Endothelial cell of umbilical vein (primary cell): ENCODE measurements at regions of chr9 and their contacts with region 1.

Region 1: DNA sequence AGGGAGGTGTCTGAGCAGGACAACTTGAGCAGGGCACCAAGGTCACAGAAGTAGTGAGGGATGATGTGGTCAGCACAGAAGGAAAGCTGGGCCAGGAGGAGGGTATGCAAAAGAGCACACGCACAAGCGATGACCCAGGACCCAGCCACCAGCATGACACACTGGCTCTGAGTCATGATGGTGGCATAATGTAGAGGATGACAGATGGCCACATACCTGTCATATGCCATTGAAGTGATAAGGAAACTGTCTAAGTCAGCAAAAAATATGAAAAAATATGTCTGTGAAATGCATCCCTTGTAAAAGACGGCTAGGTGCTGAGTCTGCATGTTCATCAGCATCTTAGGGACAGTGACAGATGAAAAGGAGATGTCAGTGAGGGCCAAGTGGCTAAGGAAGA is 380 bp downstream of the OR1J1 start:
- DNase-seq: no peak
- H3K4me3 ChIP-seq: no peak overlapping the region
- H3K27ac ChIP-seq: no peak overlapping the region
- H3K4me1 ChIP-seq: no peaks in the 10 kb centered on the region
- H3K27me3 ChIP-seq: peaks cover 10 to 11% of the 10 kb centered on the region in 2 experiments
- CTCF ChIP-seq: no peak
- POLR2A ChIP-seq: no peak

Region 2: DNA sequence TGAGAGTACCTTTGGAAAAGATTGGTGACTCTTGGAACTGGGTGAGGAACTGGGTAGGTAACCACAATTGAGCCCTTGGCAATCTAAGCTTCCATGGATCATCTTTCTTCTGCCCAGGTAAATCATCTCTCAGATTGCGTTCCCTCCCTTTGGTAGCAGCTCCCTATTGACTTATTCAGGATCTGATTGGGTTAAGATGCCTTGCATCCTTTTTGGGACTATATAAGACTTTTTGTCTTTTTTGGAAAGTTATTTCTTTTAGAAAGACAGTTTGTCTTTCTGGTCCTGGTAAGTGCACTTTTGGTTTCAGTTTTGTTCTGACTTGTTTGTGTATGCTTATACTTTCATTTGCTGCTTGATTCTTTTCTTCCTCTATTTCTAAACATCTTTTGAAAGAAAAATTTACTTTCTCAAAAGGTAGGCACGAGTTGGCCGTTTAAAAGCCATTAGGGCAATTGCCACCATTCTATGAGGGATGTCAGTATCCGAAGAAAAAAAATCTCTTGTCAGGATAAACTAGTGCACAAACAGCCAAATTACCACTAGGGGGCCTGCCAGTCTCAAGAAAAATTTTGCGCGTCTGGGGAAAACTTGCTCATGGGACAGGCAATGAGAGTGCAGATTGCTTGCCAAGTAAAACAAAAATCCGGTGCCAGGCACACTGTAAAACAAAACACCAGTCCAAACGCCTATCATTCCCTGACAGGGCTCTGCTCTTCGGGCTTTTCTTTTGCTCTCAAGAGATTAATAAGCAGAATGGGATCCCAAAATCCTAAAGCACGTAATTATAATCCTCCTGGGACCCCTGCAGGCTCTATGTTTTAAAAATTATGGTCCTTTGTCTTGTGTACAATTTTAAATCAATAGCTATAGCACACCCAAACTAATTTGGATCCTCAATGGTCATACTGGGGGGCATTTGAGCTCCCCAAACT is 12.4 kb before region 1 on chr9:
- CTCF ChIA-PET with region 1: interaction called, 13 read pairs
- POLR2A ChIA-PET with region 1: no interaction called
- dilution Hi-C with region 1: no loop called
- intact Hi-C with region 1: no loop called
- DNase-seq: peak; percentile 96
- H3K4me3 ChIP-seq: peak overlapping the region; percentile 24 to 96 (median 89)
- H3K27ac ChIP-seq: peak overlapping the region; percentile 26
- H3K4me1 ChIP-seq: peaks cover 7% of the 10 kb centered on the region
- H3K27me3 ChIP-seq: peaks cover 6 to 38% of the 10 kb centered on the region in 2 experiments
- CTCF ChIP-seq: peak; percentile 73 to 92
- POLR2A ChIP-seq: no peak